Left lung (tissue), 14 donors: ENCODE measurements at regions of chr16 and their contacts with region 1.

Region 1: GRCh38 chr16:10181196-10182162 is 749 bp downstream of the GRIN2A start:
- DNase-seq: peak; percentile 51 to 88 (median 60)
- ATAC-seq: peak; percentile 98
- H3K4me3 ChIP-seq: no peak overlapping the region
- H3K27ac ChIP-seq: no peak overlapping the region
- H3K4me1 ChIP-seq: peaks cover 4 to 25% of the 10 kb centered on the region in 2 donors
- H3K27me3 ChIP-seq: peaks cover 23 to 82% of the 10 kb centered on the region in 2 donors
- CTCF ChIP-seq: peak; percentile 87

Region 2: DNA sequence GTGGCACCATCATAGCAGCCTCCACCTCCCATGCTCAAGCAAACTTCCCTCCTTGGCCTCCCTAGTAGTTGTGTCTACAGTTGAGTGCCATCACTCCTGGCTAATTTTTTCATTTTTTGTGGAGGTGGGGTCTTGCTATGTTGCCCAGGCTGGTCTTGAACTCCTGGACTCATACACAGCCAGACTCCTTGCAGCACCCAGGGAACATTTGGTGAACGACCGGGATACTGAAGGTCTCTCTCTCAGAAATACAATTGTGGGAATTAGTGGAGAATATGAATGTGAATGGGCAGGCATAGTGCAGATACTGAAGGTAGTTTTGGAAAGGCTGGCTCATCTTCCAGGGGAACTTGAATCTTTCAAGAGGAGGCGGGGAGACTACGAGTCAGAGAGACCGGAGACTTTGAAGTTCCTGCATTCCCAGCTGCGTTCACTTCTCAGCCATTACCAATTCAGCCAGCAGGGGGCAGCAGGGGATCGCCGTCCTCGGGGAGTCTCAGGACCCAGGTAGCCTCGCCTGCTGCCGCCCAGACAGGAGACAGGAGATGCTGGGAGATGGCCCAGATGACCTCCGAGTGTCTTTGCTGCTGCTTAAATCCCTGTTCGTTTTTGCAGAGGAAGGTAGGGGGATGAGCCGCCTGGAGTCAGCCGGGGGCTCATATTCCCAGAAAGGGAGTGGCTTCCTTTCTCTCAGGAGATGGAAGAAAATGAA is 1021.5 kb before region 1 on chr16:
- intact Hi-C with region 1: loop called in 1 of 2 experiments (anchors 10 kb)
- DNase-seq: peak; percentile 38 to 81 (median 58)
- ATAC-seq: peak; percentile 97
- H3K4me3 ChIP-seq: no peak overlapping the region
- H3K27ac ChIP-seq: no peak overlapping the region
- H3K4me1 ChIP-seq: peaks cover 0 to 6% of the 10 kb centered on the region in 2 donors
- H3K27me3 ChIP-seq: peaks cover 0 to 16% of the 10 kb centered on the region in 2 donors
- CTCF ChIP-seq: peak; percentile 57 to 60